ENCODE measurements at regions of chr11 and their contacts with region 1.

Region 1: DNA sequence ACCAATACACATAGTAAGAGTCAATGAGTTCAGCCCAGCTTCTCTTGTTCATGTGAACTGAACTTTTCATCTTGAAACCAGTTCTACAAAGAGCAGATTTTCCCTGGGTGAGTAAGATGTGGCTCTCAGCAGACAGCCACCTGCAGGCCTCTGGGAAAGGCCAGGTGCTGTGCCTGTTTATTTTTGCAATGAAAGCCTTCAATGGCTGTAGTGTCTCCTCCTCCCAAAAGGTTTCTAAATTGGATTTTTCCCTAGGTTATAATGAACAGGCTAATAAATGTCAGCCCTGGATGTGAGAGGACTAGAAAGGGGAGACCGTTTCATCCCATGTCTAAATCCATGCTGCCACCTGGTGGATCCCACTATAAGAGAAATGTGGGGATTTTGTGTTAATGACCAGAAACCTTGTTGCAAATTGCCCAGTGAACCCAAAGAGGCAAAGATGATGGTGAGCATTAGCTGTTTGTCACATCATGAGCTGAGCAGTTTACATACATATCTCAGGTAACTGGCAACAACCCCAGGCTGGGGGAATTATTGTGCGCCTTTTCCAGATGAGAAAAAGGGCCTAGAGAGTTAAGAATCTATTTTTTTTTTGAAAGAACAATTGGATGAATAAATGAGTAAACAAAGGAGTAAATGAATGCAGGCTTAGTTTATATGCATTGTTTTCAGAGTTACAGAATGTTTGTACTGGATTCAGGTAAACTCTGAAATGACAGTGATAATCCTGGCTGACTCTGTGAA is 12.7 kb downstream of the C11orf91 start:
- DNase-seq: peak; percentile 88
- H3K4me3 ChIP-seq: no peak overlapping the region
- H3K27ac ChIP-seq: peak overlapping the region; percentile 98
- H3K4me1 ChIP-seq: peaks cover 54% of the 10 kb centered on the region
- H3K27me3 ChIP-seq: no peaks in the 10 kb centered on the region
- CTCF ChIP-seq: peak; percentile 64 to 75

Region 2: GRCh38 chr11:32960553-32961164 is 727.2 kb before region 1 on chr11:
- CTCF ChIA-PET with region 1: no interaction called
- dilution Hi-C with region 1: no loop called
- in situ Hi-C with region 1: loop called in 1 of 2 experiments (anchors 25 kb)
- intact Hi-C with region 1: no loop called
- DNase-seq: peak; percentile 40
- H3K4me3 ChIP-seq: no peak overlapping the region
- H3K27ac ChIP-seq: no peak overlapping the region
- H3K4me1 ChIP-seq: no peaks in the 10 kb centered on the region
- H3K27me3 ChIP-seq: no peaks in the 10 kb centered on the region
- CTCF ChIP-seq: peak; percentile 50 to 63

Region 3: DNA sequence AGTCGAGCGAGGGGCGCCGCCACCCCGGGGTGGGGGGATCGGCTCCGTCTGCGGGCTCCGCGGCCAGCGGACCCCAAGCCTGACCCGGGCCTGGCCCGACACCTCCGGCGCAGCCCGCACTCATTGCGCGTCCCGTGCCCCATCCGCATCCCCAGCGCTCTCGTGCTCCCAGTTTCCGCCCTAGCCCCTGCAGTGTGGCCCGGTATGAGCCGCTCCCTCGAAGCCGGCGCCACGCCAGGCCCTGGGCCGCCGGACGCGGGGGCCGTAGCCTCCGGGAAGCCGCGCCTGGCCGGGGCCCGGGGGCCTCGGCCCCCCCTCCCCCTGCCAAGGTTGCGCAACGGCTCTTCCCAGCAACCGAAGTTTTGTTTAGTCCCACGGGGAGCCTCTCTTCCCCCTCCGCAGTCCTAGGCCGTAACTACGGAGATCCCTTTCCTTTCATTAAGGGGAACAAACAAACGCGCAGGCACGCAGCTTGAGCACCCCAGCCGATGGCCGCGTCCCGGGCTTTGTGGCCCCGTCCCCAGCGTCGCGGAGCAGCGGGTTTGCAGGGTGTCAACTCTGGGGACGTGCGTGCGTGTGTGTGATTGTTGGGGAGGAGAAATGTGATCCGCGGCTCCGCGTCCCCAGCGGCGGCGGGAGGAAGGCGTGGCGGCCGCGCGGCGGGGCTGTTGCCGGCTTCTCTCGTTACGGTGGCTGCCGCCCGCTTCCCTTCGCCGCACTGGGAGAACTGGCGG is 429.8 kb before region 1 on chr11:
- CTCF ChIA-PET with region 1: no interaction called
- dilution Hi-C with region 1: no loop called
- in situ Hi-C with region 1: no loop called
- intact Hi-C with region 1: loop called (anchors 5 kb)
- DNase-seq: peak; percentile 81
- H3K4me3 ChIP-seq: peak overlapping the region; percentile 57 to 94 (median 65)
- H3K27ac ChIP-seq: peak overlapping the region; percentile 96
- H3K4me1 ChIP-seq: peaks cover 18% of the 10 kb centered on the region
- H3K27me3 ChIP-seq: no peaks in the 10 kb centered on the region
- CTCF ChIP-seq: peak; percentile 9 to 29

Region 4: GRCh38 chr11:33507967-33508366 is 179.9 kb before region 1 on chr11:
- CTCF ChIA-PET with region 1: no interaction called
- dilution Hi-C with region 1: no loop called
- in situ Hi-C with region 1: no loop called
- intact Hi-C with region 1: no loop called
- DNase-seq: peak; percentile 29
- H3K4me3 ChIP-seq: no peak overlapping the region
- H3K27ac ChIP-seq: no peak overlapping the region
- H3K4me1 ChIP-seq: no peaks in the 10 kb centered on the region
- H3K27me3 ChIP-seq: no peaks in the 10 kb centered on the region
- CTCF ChIP-seq: no peak

Region 5: GRCh38 chr11:33542921-33543320 is 145.0 kb before region 1 on chr11:
- CTCF ChIA-PET with region 1: no interaction called
- dilution Hi-C with region 1: no loop called
- in situ Hi-C with region 1: loop called (anchors 5 to 10 kb)
- intact Hi-C with region 1: loop called (anchors 1 kb)
- DNase-seq: peak; percentile 47
- H3K4me3 ChIP-seq: no peak overlapping the region
- H3K27ac ChIP-seq: no peak overlapping the region
- H3K4me1 ChIP-seq: peaks cover 8% of the 10 kb centered on the region
- H3K27me3 ChIP-seq: no peaks in the 10 kb centered on the region
- CTCF ChIP-seq: peak; percentile 84 to 88

Region 6: GRCh38 chr11:33700425-33701271 is 12.7 kb after region 1 on chr11 and contains the start of gene C11orf91:
- CTCF ChIA-PET with region 1: no interaction called
- dilution Hi-C with region 1: no loop called
- in situ Hi-C with region 1: no loop called
- intact Hi-C with region 1: loop called (anchors 1 kb)
- DNase-seq: peak; percentile 92
- H3K4me3 ChIP-seq: peak within 1 kb of the TSS; percentile 5 to 70 (median 22)
- H3K27ac ChIP-seq: peak within 1 kb of the TSS; percentile 98
- H3K4me1 ChIP-seq: peaks cover 84% of the 10 kb centered on the region
- H3K27me3 ChIP-seq: no peaks in the 10 kb centered on the region
- CTCF ChIP-seq: no peak
- total RNA-seq, gene C11orf91: 7.6 TPM in 1 of 2 donors, not detected in the other

Region 7: DNA sequence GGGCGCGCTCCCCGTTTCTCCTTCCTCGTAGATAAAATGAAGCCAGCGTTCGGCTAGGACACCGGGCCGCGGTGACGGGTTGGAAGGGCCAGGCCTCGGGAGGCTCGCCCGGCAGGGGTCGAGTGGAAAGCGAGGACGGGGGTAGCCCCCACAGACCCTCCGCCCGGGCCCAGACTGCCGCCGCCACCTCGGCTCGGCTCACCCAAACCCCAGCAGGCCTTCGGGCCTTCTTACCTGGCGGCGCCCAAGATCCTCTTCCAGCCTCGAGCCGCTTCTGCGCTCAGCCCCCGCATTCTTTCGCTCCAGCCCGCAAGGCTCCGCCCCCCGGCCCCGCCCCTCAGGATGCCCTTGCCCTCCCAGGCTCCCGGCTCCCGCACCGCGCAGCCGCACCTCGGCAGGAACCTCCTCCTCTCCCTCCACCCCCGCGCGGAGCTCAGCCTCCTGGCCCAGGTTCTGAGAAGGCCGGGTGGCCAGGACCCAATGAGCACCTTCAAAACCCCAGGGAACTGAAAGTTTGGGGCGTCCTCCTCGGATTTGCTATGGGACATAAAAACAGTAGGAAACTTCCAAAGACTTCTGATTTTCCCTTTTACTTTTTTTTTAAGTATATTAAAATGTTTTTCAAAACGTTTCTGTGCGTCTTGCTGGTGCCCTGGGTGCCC is 48.4 kb after region 1 on chr11 and contains the start of gene CD59:
- CTCF ChIA-PET with region 1: no interaction called
- dilution Hi-C with region 1: no loop called
- in situ Hi-C with region 1: no loop called
- intact Hi-C with region 1: loop called (anchors 2 kb)
- DNase-seq: peak; percentile 94
- H3K4me3 ChIP-seq: peak within 1 kb of the TSS; percentile 51 to 86 (median 64)
- H3K27ac ChIP-seq: peak within 1 kb of the TSS; percentile 97
- H3K4me1 ChIP-seq: peaks cover 38% of the 10 kb centered on the region
- H3K27me3 ChIP-seq: no peaks in the 10 kb centered on the region
- CTCF ChIP-seq: no peak
- total RNA-seq, gene CD59: 1,038 to 1,326 TPM

Region 8: DNA sequence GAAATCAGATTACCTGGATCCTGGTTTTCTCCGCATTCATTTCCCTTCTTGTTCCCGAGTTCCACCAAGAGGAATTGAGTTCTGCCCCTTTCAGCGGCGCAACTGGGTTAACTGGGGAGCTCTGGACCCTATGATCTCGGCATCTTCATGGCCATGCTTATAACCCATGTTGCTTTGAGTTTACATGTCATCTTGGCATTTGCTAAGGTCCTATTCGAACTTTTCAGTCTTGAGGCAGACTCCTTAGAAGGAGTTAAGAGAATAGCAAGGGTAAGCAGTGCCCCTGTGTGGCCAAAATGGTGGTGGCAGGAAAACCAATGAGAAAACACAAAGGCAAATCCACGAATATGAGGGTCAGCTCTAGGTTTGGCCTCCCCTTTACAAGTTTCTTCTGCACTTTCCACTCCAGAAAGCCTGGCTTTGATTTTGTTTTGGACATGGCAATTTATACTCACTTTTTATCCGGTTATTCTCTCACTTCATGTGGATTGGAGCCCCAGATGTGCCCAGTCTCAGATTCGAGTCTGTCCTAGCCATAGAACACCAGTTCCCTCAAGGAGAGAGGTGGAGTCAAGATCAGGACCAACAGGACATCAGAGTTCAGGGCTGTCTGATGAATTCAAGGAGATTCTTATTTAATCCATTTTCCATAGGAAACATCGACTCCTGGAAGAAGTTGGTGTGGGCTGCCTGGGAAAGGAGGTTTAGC is 141.7 kb after region 1 on chr11:
- CTCF ChIA-PET with region 1: interaction called, 3 read pairs
- dilution Hi-C with region 1: no loop called
- in situ Hi-C with region 1: no loop called
- intact Hi-C with region 1: loop called (anchors 1 kb)
- DNase-seq: peak; percentile 66
- H3K4me3 ChIP-seq: peak overlapping the region; percentile 41 to 52 (median 52)
- H3K27ac ChIP-seq: no peak overlapping the region
- H3K4me1 ChIP-seq: peaks cover 26% of the 10 kb centered on the region
- H3K27me3 ChIP-seq: no peaks in the 10 kb centered on the region
- CTCF ChIP-seq: peak; percentile 93 to 95

Region 9: GRCh38 chr11:33920838-33921613 is 233.1 kb after region 1 on chr11:
- CTCF ChIA-PET with region 1: no interaction called
- dilution Hi-C with region 1: no loop called
- in situ Hi-C with region 1: no loop called
- intact Hi-C with region 1: no loop called
- DNase-seq: no peak
- H3K4me3 ChIP-seq: no peak overlapping the region
- H3K27ac ChIP-seq: no peak overlapping the region
- H3K4me1 ChIP-seq: no peaks in the 10 kb centered on the region
- H3K27me3 ChIP-seq: no peaks in the 10 kb centered on the region
- CTCF ChIP-seq: no peak